Naive thymus-derived CD4-positive, alpha-beta T cell (primary cell): ENCODE measurements at regions of chr4 and their contacts with region 1.

Region 1: GRCh38 chr4:83455281-83456129 is at the starts of genes HELQ and MRPS18C:
- DNase-seq: peak; percentile 77 to 98 (median 97)
- ATAC-seq: peak; percentile 94
- H3K4me3 ChIP-seq: peak within 1 kb of the TSS; percentile 75
- H3K4me3 Mint-ChIP-seq: peak within 1 kb of the TSS; percentile 98 to 100 (median 99)
- H3K27ac ChIP-seq: peak within 1 kb of the TSS; percentile 98
- H3K27ac Mint-ChIP-seq: peak within 1 kb of the TSS; percentile 100
- H3K4me1 ChIP-seq: peaks cover 24 to 33% of the 10 kb centered on the region in 2 donors
- H3K4me1 Mint-ChIP-seq: peaks cover 21 to 75% (median 58%) of the 10 kb centered on the region in 7 donors
- H3K27me3 ChIP-seq: no peaks in the 10 kb centered on the region
- H3K27me3 Mint-ChIP-seq: peaks cover 0 to 3% (median 0%) of the 10 kb centered on the region in 5 donors
- total RNA-seq, gene HELQ: 14.1 to 53.9 (median 40.4) TPM
- total RNA-seq, gene MRPS18C: 18.4 to 56.1 (median 46.7) TPM

Region 2: DNA sequence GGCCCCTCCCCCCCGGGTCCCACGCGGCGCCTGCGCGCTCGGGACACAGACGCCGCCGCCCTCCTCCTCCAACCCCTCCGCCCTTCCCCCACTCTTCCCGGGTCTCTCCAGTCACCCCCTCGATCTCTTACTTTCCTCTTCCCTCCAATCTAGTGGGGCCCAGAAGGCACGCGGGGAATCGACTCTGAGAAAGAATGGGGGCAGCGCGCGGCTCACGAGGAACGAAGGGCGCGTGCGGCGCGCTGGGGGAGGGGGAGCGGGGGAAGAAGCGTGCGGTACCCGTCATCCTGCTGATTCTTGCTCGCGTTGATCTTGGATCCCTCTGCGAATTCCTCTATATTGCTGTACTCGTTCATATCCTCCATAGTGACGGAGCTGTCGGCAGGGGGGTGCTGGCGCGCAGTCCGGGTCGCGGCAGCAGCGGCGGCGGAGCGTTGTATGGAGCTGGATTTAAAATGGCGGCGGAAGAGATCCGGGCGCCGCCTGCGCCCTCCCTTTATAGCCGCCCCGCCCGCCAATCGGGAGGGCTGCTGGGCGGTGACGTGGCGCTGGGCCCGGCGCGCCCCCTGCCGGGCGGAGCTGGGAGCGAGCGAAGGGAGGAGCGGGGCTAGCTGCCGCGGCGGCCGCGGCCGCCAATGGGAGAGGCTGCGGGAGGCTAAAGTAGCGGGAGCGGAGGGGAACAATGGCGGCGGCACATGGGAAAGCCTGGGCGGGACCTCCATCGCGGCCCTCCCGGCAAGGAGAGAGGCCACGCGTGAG is 1026.4 kb before region 1 on chr4:
- CTCF ChIA-PET with region 1: interaction called, 4 read pairs
- POLR2A ChIA-PET with region 1: interaction called, 5 read pairs
- intact Hi-C with region 1: loop called (anchors 1 kb)
- DNase-seq: peak; percentile 90 to 99 (median 94)
- ATAC-seq: peak; percentile 79
- H3K4me3 ChIP-seq: peak overlapping the region; percentile 96
- H3K4me3 Mint-ChIP-seq: peak overlapping the region; percentile 98 to 100 (median 99)
- H3K27ac ChIP-seq: peak overlapping the region; percentile 99
- H3K27ac Mint-ChIP-seq: peak overlapping the region; percentile 98 to 100 (median 99)
- H3K4me1 ChIP-seq: peaks cover 28 to 39% of the 10 kb centered on the region in 2 donors
- H3K4me1 Mint-ChIP-seq: peaks cover 40 to 81% (median 69%) of the 10 kb centered on the region in 7 donors
- H3K27me3 ChIP-seq: no peaks in the 10 kb centered on the region
- H3K27me3 Mint-ChIP-seq: peaks cover 0 to 2% (median 0%) of the 10 kb centered on the region in 5 donors

Region 3: DNA sequence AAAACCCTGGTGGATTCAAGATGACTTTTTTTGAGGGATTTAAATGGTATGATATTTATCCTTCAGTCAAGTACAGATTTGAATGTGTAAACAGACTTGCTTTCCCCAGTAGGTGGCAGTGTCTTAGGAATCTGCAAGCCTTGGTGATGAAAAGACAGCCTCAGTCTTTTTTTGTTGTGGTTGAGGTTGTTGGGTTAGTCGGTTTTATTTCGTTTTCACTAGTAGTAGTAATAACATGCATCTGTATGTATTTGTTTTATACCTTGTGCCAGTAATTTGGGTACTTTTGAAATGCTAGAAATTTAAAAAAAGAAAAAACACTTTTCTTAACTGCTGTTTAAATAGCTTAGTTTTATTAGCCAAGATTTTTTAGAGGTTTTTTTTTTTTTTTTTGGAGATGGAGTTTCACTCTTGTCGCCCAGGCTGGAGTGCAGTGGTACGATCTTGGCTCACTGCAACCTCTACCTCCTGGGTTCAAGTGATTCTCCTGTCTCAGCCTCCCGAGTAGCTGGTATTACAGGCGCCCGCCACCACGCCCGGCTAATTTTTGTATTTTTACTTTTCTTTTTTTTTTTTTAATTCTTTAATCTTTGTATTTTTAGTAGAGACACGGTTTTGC is 381.3 kb before region 1 on chr4:
- CTCF ChIA-PET with region 1: no interaction called
- POLR2A ChIA-PET with region 1: no interaction called
- intact Hi-C with region 1: loop called in 1 of 2 experiments (anchors 1 kb)
- DNase-seq: peak in 8 of 9 donors; percentile 49 to 91 (median 85)
- ATAC-seq: peak; percentile 99
- H3K4me3 ChIP-seq: no peak overlapping the region
- H3K4me3 Mint-ChIP-seq: peak overlapping the region; percentile 43 to 85 (median 76)
- H3K27ac ChIP-seq: no peak overlapping the region
- H3K27ac Mint-ChIP-seq: peak overlapping the region; percentile 19 to 87 (median 79)
- H3K4me1 ChIP-seq: peaks cover 0 to 6% of the 10 kb centered on the region in 2 donors
- H3K4me1 Mint-ChIP-seq: peaks cover 8 to 28% (median 14%) of the 10 kb centered on the region in 7 donors
- H3K27me3 ChIP-seq: no peaks in the 10 kb centered on the region
- H3K27me3 Mint-ChIP-seq: no peaks in the 10 kb centered on the region

Region 4: GRCh38 chr4:83348074-83348473 is 107.4 kb before region 1 on chr4:
- CTCF ChIA-PET with region 1: no interaction called
- POLR2A ChIA-PET with region 1: no interaction called
- intact Hi-C with region 1: loop called in 1 of 2 experiments (anchors 1 kb)
- DNase-seq: no peak
- ATAC-seq: no peak
- H3K4me3 ChIP-seq: no peak overlapping the region
- H3K4me3 Mint-ChIP-seq: no peak overlapping the region
- H3K27ac ChIP-seq: no peak overlapping the region
- H3K27ac Mint-ChIP-seq: peak overlapping the region in 1 of 9 donors; percentile 70
- H3K4me1 ChIP-seq: peaks cover 0 to 7% of the 10 kb centered on the region in 2 donors
- H3K4me1 Mint-ChIP-seq: peaks cover 7 to 19% (median 10%) of the 10 kb centered on the region in 7 donors
- H3K27me3 ChIP-seq: no peaks in the 10 kb centered on the region
- H3K27me3 Mint-ChIP-seq: peaks cover 0 to 14% (median 3%) of the 10 kb centered on the region in 5 donors

Region 5: GRCh38 chr4:83503974-83504373 is 48.5 kb after region 1 on chr4:
- CTCF ChIA-PET with region 1: no interaction called
- POLR2A ChIA-PET with region 1: interaction called, 9 read pairs
- intact Hi-C with region 1: loop called in 1 of 2 experiments (anchors 1 kb)
- DNase-seq: peak in 6 of 9 donors; percentile 15 to 62 (median 47)
- ATAC-seq: peak; percentile 62
- H3K4me3 ChIP-seq: peak overlapping the region; percentile 1
- H3K4me3 Mint-ChIP-seq: peak overlapping the region; percentile 4 to 70 (median 51)
- H3K27ac ChIP-seq: peak overlapping the region; percentile 51
- H3K27ac Mint-ChIP-seq: peak overlapping the region in 8 of 9 donors; percentile 26 to 94 (median 89)
- H3K4me1 ChIP-seq: peaks cover 3 to 17% of the 10 kb centered on the region in 2 donors
- H3K4me1 Mint-ChIP-seq: peaks cover 10 to 24% (median 18%) of the 10 kb centered on the region in 7 donors
- H3K27me3 ChIP-seq: no peaks in the 10 kb centered on the region
- H3K27me3 Mint-ChIP-seq: no peaks in the 10 kb centered on the region